ENCODE measurements at regions of chr3 and their contacts with region 1.

Region 1: DNA sequence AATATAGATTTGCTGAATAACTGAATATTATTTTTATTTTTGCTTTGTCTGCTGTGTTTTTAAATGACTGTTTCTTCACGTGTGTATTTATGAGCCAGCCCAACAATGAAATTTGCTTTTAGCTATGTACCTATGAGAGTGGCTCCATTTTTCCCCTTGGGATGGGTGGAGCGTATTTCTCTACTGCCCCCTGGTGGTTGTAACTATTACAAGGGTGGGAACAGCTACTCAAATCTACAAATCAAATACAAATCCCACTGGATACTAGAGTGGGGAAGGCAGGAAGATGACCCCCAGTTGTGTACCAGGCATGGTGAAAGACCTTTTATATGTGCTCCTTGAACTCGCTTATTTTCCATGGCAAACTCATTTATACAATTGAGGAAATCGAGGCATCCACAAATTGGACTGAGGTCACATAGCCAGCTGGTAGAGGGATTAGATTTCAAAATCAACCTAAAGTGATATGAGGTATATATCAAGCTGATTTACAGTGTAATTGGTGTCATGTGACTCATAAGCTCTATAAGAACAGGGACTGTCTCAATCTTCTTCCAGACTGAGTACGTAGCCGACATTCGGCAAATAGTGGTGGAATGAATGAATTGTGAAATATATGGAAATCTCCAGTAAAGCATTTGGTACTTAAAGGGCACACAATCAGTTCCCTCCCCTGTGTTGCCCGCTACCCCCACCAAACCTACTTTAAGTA is 69.5 kb upstream of the VEPH1 start:
- DNase-seq: no peak
- ATAC-seq: no peak
- H3K4me3 Mint-ChIP-seq: no peak overlapping the region
- H3K27ac Mint-ChIP-seq: no peak overlapping the region
- H3K4me1 Mint-ChIP-seq: no peaks in the 10 kb centered on the region
- H3K27me3 Mint-ChIP-seq: peaks cover 14% of the 10 kb centered on the region
- CTCF ChIP-seq: no peak

Region 2: DNA sequence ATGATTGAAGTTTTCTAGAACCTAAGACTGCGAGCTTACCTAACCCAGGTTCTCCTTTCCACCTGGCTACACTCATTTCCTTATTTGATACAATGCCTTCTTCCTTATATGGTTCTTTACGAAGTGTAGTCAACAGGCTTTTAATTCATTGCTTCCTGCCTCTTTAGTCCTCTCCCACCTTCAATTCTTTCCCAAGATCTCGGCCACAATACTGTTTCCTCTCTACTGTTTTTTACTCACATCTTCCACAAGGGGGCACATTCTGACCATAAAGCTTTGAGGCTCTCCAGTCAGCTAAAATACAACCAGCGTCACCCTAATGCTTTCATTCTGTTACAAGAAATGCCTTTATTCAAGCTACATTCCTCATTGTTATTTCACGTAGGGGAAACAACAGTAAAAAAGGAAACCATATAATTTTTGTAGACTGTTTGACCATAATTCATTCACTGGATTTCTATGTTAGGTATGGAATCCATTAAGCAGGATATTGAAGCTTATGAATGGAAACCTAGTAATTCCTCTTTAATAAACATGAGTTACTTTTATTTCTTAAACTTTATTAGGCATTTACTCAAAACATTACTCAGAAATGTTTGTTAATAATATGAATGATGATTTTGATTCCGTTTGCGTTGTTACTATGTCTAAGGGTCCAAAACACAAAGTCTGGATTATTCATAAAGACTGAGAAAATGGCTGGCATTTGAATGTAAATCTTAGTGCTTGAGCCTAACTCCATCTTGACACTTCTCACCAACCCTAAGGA is 40.0 kb before region 1 on chr3:
- CTCF ChIA-PET with region 1: interaction called, 13 read pairs
- POLR2A ChIA-PET with region 1: no interaction called
- intact Hi-C with region 1: loop called (anchors 1 kb)
- DNase-seq: no peak
- ATAC-seq: no peak
- H3K4me3 Mint-ChIP-seq: no peak overlapping the region
- H3K27ac Mint-ChIP-seq: no peak overlapping the region
- H3K4me1 Mint-ChIP-seq: no peaks in the 10 kb centered on the region
- H3K27me3 Mint-ChIP-seq: no peaks in the 10 kb centered on the region
- CTCF ChIP-seq: no peak

Region 3: DNA sequence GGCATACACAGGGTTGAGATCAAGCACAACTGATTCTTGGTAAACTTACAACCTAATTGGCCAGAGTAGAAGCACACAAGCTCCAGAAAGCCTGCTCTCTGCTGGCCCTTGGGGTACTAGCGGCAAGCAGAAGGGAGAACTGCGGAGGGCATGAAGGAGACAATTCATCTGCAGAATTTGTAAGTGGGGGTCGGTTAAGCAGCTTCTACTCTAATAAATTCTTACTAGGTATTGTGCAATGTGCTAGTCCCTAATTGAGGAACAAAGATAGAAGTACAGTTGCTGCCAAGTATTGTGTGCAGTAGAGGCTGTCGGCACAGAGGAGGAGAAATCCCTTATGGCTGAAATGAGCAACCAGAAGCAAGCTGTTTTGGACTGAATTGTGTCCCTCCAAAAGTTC is 21.7 kb after region 1 on chr3:
- CTCF ChIA-PET with region 1: no interaction called
- POLR2A ChIA-PET with region 1: no interaction called
- intact Hi-C with region 1: no loop called
- DNase-seq: no peak
- ATAC-seq: no peak
- H3K4me3 Mint-ChIP-seq: no peak overlapping the region
- H3K27ac Mint-ChIP-seq: no peak overlapping the region
- H3K4me1 Mint-ChIP-seq: no peaks in the 10 kb centered on the region
- H3K27me3 Mint-ChIP-seq: peaks cover 8% of the 10 kb centered on the region
- CTCF ChIP-seq: no peak

Measured in activated B cell treated with CpG ODN at 0.5 μM for 24 hours (primary cell).